ENCODE measurements at regions of chr7 and their contacts with region 1.

Region 1: GRCh38 chr7:8436965-8437364 is 3.6 kb downstream of the NXPH1 start:
- DNase-seq: peak; percentile 72
- H3K4me3 Mint-ChIP-seq: no peak overlapping the region
- H3K27ac Mint-ChIP-seq: no peak overlapping the region
- H3K4me1 Mint-ChIP-seq: peaks cover 31% of the 10 kb centered on the region
- H3K27me3 Mint-ChIP-seq: peaks cover 78% of the 10 kb centered on the region

Region 2: GRCh38 chr7:8724080-8724718 is 287.2 kb after region 1 on chr7:
- CTCF ChIA-PET with region 1: no interaction called
- POLR2A ChIA-PET with region 1: no interaction called
- intact Hi-C with region 1: loop called (anchors 1 kb)
- DNase-seq: peak; percentile 19
- H3K4me3 Mint-ChIP-seq: no peak overlapping the region
- H3K27ac Mint-ChIP-seq: no peak overlapping the region
- H3K4me1 Mint-ChIP-seq: no peaks in the 10 kb centered on the region
- H3K27me3 Mint-ChIP-seq: no peaks in the 10 kb centered on the region